ENCODE measurements at regions of chr20 and their contacts with region 1.

Region 1: DNA sequence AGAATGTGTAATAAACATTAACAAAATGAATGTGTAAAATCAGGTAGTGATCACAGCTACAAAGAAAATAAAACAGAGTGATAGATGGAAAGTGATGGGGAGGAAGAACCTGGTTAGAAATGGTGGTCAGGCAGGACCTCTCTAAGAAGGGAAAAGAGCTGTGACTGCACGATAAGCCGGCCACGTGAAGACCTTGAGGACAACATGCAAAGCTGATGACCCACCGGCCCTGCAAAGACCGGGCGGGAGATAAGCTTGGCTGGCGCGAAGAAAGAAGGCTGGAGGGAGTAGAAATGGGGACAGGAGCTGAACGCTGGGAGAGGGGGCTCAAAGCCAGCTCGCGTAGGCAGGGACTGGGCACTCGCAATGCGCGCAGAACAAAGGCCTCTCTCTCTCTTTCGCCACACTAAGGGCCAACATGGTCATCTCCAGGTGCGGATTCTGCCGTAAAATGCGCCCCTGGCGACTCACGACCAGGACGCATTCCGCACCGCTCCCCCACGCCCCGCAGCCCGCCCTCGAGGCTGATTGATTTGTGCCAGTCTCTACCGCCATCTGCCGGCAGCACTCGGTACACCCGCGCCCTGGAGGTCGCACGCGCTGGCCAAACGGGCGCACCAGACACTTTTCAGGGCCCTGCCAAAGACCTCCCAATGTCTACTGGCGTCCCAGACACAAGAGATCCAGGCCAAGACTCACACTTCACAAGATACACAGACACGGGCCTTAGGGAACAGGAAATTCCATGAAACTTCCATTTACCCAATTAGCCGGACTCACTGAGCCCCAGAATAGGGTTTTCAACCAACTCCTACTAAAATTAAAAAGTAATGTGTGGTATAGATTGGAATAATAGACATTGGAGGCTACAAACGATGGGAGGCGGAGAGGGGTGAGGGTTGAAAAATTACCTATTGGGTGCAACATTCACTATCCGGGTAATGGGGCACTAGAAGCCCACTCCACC is 9.4 kb downstream of the DEFB132 start:
- DNase-seq: peak; percentile 82 to 94 (median 87)
- ATAC-seq: peak; percentile 100
- H3K4me3 ChIP-seq: peak overlapping the region; percentile 57
- H3K4me3 Mint-ChIP-seq: peak overlapping the region; percentile 86
- H3K27ac ChIP-seq: no peak overlapping the region
- H3K27ac Mint-ChIP-seq: no peak overlapping the region
- H3K4me1 ChIP-seq: peaks cover 8% of the 10 kb centered on the region
- H3K4me1 Mint-ChIP-seq: peaks cover 10% of the 10 kb centered on the region
- H3K27me3 ChIP-seq: no peaks in the 10 kb centered on the region
- H3K27me3 Mint-ChIP-seq: peaks cover 4% of the 10 kb centered on the region
- CTCF ChIP-seq: peak; percentile 96

Region 2: DNA sequence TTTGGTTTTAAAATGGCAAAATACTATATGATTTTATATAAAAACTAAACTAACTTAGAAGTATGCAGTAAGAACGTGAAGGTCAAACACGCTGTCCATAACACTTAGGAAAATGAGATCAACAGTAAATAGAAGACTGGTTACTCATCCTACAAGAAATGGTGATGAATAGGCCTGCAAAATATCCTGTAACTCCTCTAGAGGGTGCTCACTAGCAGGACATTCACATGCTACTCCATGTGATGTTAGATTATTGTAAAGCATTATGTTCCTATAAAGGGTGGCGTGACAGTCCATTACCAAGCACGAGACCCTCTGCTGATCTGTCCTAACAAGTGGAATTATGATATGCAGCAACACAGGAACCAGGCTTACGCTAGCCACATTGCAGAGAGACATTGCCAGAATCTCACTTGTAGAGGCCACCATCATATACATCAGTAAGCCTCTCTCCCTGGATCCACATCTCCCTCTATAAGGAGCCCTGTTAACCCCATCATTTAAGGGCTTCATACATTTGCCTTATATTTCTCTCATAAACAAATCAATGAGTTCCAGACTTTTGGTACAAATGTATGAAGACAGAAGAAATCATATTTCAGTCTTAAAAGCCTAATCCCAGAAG is 57.8 kb before region 1 on chr20:
- CTCF ChIA-PET with region 1: interaction called, 4 read pairs
- POLR2A ChIA-PET with region 1: no interaction called
- intact Hi-C with region 1: loop called (anchors 1 kb)
- DNase-seq: peak in 6 of 14 experiments; percentile 8 to 67 (median 46)
- ATAC-seq: peak; percentile 83
- H3K4me3 ChIP-seq: no peak overlapping the region
- H3K4me3 Mint-ChIP-seq: no peak overlapping the region
- H3K27ac ChIP-seq: no peak overlapping the region
- H3K27ac Mint-ChIP-seq: no peak overlapping the region
- H3K4me1 ChIP-seq: no peaks in the 10 kb centered on the region
- H3K4me1 Mint-ChIP-seq: no peaks in the 10 kb centered on the region
- H3K27me3 ChIP-seq: no peaks in the 10 kb centered on the region
- H3K27me3 Mint-ChIP-seq: no peaks in the 10 kb centered on the region
- CTCF ChIP-seq: peak; percentile 70

Region 3: DNA sequence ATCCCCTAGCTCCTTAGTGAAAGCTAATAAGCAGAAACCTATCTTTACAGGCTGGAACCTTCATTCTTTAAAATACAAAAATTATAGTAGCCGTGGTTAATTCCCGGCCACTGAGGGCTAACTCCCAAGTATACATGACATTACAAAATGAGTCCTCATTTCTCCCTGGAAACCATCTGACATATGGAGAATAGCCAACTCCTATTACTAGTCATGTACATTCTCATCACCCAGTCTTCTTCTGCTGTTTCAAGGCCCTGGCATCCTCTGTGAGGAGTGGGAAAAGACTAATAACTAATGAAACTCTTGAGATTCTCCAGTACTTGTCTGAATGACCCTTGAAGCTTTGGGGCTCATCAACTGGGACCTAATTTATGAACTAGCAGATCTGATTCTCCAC is 246.6 kb after region 1 on chr20:
- CTCF ChIA-PET with region 1: no interaction called
- POLR2A ChIA-PET with region 1: no interaction called
- intact Hi-C with region 1: no loop called
- DNase-seq: no peak
- ATAC-seq: no peak
- H3K4me3 ChIP-seq: no peak overlapping the region
- H3K4me3 Mint-ChIP-seq: no peak overlapping the region
- H3K27ac ChIP-seq: no peak overlapping the region
- H3K27ac Mint-ChIP-seq: peak overlapping the region; percentile 52
- H3K4me1 ChIP-seq: peaks cover 3% of the 10 kb centered on the region
- H3K4me1 Mint-ChIP-seq: peaks cover 80% of the 10 kb centered on the region
- H3K27me3 ChIP-seq: no peaks in the 10 kb centered on the region
- H3K27me3 Mint-ChIP-seq: no peaks in the 10 kb centered on the region
- CTCF ChIP-seq: no peak

Region 4: DNA sequence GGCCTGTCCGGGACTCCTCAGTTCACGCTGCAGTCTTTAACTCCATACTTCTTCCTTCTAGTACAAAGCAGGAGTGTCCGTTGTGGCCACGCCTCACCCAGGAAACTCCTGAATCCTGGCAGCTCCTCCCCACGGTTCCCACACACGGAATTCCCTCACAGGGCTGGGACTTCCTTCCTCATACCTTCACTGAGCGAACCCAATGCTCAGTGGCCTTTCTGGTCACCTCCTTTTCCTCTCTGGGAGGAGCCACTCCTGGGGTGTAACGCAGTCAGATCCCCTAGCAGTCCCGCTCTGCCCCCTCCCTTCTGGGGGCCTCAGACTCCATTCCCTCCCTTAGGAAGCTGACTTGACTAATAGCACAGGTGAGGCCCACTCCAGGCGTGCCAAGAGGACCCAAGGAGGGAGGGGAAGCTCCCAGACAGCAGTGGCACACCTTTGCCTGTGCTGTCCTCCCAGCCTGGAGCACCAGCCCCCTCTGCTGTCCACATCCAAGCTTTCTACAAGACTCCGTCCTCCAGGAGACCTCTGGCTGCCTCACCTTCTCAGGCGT is 501.6 kb after region 1 on chr20 and contains the start of gene SLC52A3:
- CTCF ChIA-PET with region 1: no interaction called
- POLR2A ChIA-PET with region 1: no interaction called
- intact Hi-C with region 1: no loop called
- DNase-seq: no peak
- ATAC-seq: no peak
- H3K4me3 ChIP-seq: no peak within 1 kb of the TSS
- H3K4me3 Mint-ChIP-seq: no peak within 1 kb of the TSS
- H3K27ac ChIP-seq: no peak within 1 kb of the TSS
- H3K27ac Mint-ChIP-seq: no peak within 1 kb of the TSS
- H3K4me1 ChIP-seq: no peaks in the 10 kb centered on the region
- H3K4me1 Mint-ChIP-seq: no peaks in the 10 kb centered on the region
- H3K27me3 ChIP-seq: peaks cover 4 to 22% of the 10 kb centered on the region in 2 experiments
- H3K27me3 Mint-ChIP-seq: peaks cover 28% of the 10 kb centered on the region
- CTCF ChIP-seq: no peak
- total RNA-seq, gene SLC52A3: not detected

Measured in CD4-positive, alpha-beta T cell (primary cell).